Naive thymus-derived CD4-positive, alpha-beta T cell (primary cell): ENCODE measurements at regions of chr11 and their contacts with region 1.

Region 1: GRCh38 chr11:114059278-114059983 is at the start of gene ZBTB16:
- DNase-seq: peak; percentile 37 to 72 (median 58)
- ATAC-seq: peak; percentile 74
- H3K4me3 ChIP-seq: peak within 1 kb of the TSS; percentile 70
- H3K4me3 Mint-ChIP-seq: peak within 1 kb of the TSS; percentile 89 to 95 (median 92)
- H3K27ac ChIP-seq: peak within 1 kb of the TSS; percentile 14
- H3K27ac Mint-ChIP-seq: peak within 1 kb of the TSS in 8 of 9 donors; percentile 21 to 81 (median 55)
- H3K4me1 ChIP-seq: peaks cover 0 to 10% of the 10 kb centered on the region in 2 donors
- H3K4me1 Mint-ChIP-seq: peaks cover 0 to 10% (median 7%) of the 10 kb centered on the region in 7 donors
- H3K27me3 ChIP-seq: no peaks in the 10 kb centered on the region
- H3K27me3 Mint-ChIP-seq: peaks cover 16 to 76% (median 24%) of the 10 kb centered on the region in 5 donors
- total RNA-seq, gene ZBTB16: 3.0 to 22.1 (median 7.2) TPM

Region 2: DNA sequence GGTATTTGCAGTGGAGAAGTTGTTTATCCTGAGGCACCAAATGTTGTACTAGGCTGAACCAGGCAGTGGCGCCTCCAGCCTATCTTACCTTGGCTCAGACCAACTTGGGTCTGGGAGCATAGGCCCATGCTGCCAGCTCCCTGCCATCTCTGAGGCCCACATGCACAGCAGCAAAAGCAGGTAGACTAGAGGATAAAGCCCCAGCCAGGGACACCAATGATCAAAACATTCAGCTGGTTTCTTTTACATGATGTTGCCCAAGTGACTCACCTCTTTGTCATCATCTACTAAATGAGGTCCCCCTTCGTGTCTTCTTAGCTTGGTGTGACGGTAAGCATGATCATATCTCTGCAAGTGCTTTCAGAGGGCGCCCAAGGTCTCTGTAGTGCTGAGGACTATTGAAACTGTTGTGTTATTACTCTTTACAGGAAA is 472.1 kb before region 1 on chr11:
- CTCF ChIA-PET with region 1: no interaction called
- POLR2A ChIA-PET with region 1: no interaction called
- intact Hi-C with region 1: no loop called
- DNase-seq: peak in 1 of 9 donors; percentile 27
- ATAC-seq: no peak
- H3K4me3 ChIP-seq: no peak overlapping the region
- H3K4me3 Mint-ChIP-seq: no peak overlapping the region
- H3K27ac ChIP-seq: no peak overlapping the region
- H3K27ac Mint-ChIP-seq: peak overlapping the region in 1 of 9 donors; percentile 77
- H3K4me1 ChIP-seq: no peaks in the 10 kb centered on the region
- H3K4me1 Mint-ChIP-seq: peaks cover 0 to 36% (median 0%) of the 10 kb centered on the region in 7 donors
- H3K27me3 ChIP-seq: no peaks in the 10 kb centered on the region
- H3K27me3 Mint-ChIP-seq: peaks cover 0 to 27% (median 10%) of the 10 kb centered on the region in 5 donors

Region 3: DNA sequence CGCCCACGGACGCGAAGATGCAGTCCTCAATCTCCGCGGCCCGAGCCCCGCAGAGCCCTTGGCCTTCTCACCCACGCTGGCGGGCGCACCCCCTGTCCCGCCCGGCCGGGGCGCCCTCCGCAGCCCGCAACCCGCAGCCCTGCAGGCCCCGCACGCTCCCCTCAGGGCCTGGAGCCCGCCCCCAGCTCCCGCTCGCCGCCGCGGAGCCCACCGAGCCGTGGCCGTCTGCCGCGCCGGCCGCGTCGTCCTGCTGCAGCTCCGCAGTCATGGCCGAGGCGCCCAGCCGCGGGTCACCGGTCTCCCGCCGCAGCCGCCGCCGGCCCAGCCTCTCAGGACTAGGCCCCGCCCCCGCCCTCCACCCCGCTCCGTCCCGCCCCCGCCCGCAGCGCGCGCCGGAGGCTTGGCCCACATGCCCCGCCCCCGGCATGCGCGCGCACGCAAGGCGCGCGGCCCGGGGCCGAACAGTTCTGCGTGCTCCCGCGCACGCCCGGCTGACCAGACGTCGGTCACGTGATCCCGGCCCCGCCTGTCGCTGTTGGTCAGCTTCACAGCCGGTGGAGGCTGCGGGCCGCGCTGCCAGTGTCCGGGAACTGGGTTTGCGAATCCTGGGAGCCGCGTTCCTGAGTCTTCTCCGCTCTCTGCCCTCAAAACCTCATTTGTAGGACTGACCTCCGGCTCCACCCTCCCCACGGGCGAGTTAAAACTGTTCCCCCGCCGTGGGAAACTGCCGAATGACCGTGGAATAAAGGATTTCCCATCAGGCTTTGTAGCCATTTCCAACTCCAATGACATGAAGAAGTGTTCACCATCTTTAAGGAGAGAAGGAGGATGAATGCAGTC is 184.0 kb before region 1 on chr11 and contains the start of gene USP28:
- CTCF ChIA-PET with region 1: no interaction called
- POLR2A ChIA-PET with region 1: no interaction called
- intact Hi-C with region 1: loop called in 1 of 2 experiments (anchors 1 kb)
- DNase-seq: peak; percentile 49 to 92 (median 73)
- ATAC-seq: peak; percentile 97
- H3K4me3 ChIP-seq: peak within 1 kb of the TSS; percentile 79
- H3K4me3 Mint-ChIP-seq: peak within 1 kb of the TSS; percentile 88 to 100 (median 98)
- H3K27ac ChIP-seq: peak within 1 kb of the TSS; percentile 78
- H3K27ac Mint-ChIP-seq: peak within 1 kb of the TSS; percentile 91 to 99 (median 98)
- H3K4me1 ChIP-seq: no peaks in the 10 kb centered on the region
- H3K4me1 Mint-ChIP-seq: peaks cover 34 to 59% (median 54%) of the 10 kb centered on the region in 7 donors
- H3K27me3 ChIP-seq: no peaks in the 10 kb centered on the region
- H3K27me3 Mint-ChIP-seq: no peaks in the 10 kb centered on the region
- total RNA-seq, gene USP28: 12.0 to 50.3 (median 19.0) TPM

Region 4: GRCh38 chr11:114036156-114036811 is 23.1 kb before region 1 on chr11:
- CTCF ChIA-PET with region 1: interaction called, 4 read pairs
- POLR2A ChIA-PET with region 1: interaction called, 3 read pairs
- intact Hi-C with region 1: loop called in 1 of 2 experiments (anchors 1 kb)
- DNase-seq: peak; percentile 16 to 57 (median 42)
- ATAC-seq: peak; percentile 89
- H3K4me3 ChIP-seq: no peak overlapping the region
- H3K4me3 Mint-ChIP-seq: peak overlapping the region in 5 of 10 donors; percentile 11 to 57 (median 44)
- H3K27ac ChIP-seq: no peak overlapping the region
- H3K27ac Mint-ChIP-seq: peak overlapping the region in 1 of 9 donors; percentile 28
- H3K4me1 ChIP-seq: peaks cover 0 to 3% of the 10 kb centered on the region in 2 donors
- H3K4me1 Mint-ChIP-seq: peaks cover 0 to 5% (median 0%) of the 10 kb centered on the region in 7 donors
- H3K27me3 ChIP-seq: no peaks in the 10 kb centered on the region
- H3K27me3 Mint-ChIP-seq: peaks cover 0 to 34% (median 0%) of the 10 kb centered on the region in 5 donors

Region 5: GRCh38 chr11:114099392-114100178 is 40.2 kb after region 1 on chr11:
- CTCF ChIA-PET with region 1: no interaction called
- POLR2A ChIA-PET with region 1: interaction called, 4 read pairs
- intact Hi-C with region 1: loop called (anchors 5 to 10 kb)
- DNase-seq: no peak
- ATAC-seq: peak; percentile 43
- H3K4me3 ChIP-seq: no peak overlapping the region
- H3K4me3 Mint-ChIP-seq: no peak overlapping the region
- H3K27ac ChIP-seq: no peak overlapping the region
- H3K27ac Mint-ChIP-seq: peak overlapping the region in 4 of 9 donors; percentile 2 to 76 (median 54)
- H3K4me1 ChIP-seq: peaks cover 13 to 21% of the 10 kb centered on the region in 2 donors
- H3K4me1 Mint-ChIP-seq: peaks cover 19 to 75% (median 47%) of the 10 kb centered on the region in 7 donors
- H3K27me3 ChIP-seq: no peaks in the 10 kb centered on the region
- H3K27me3 Mint-ChIP-seq: peaks cover 0 to 28% (median 0%) of the 10 kb centered on the region in 5 donors

Region 6: DNA sequence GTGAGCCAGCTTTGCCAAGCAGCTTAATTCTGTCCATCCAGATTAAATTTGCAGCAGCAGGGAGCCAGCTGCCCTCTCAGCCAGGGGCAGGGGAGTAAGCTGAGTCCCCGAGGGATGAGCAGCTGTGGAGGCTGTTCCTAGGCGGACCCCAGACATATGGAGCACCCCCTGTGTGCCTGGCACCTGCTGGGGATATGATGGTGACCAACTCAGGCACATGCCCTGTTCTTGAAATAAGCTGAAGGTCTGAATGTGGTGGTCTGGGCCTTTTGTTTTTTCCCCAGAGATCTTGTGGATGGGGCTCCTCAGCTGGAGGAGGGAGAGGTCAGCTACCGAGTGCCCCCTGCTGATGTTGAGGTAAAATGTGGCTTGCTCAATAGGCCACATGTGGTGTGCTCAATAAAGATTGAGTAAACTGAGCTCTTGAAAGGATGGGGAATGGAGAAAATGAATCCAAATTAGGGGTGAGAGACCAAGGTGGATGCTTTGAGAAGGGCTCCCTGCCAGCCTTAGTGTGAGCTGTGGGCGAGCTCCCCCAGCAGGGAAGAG is 133.5 kb after region 1 on chr11:
- CTCF ChIA-PET with region 1: interaction called, 5 read pairs
- POLR2A ChIA-PET with region 1: interaction called, 6 read pairs
- intact Hi-C with region 1: loop called (anchors 1 kb)
- DNase-seq: no peak
- ATAC-seq: no peak
- H3K4me3 ChIP-seq: no peak overlapping the region
- H3K4me3 Mint-ChIP-seq: no peak overlapping the region
- H3K27ac ChIP-seq: no peak overlapping the region
- H3K27ac Mint-ChIP-seq: peak overlapping the region in 5 of 9 donors; percentile 16 to 54 (median 39)
- H3K4me1 ChIP-seq: peaks cover 3 to 8% of the 10 kb centered on the region in 2 donors
- H3K4me1 Mint-ChIP-seq: peaks cover 11 to 57% (median 37%) of the 10 kb centered on the region in 7 donors
- H3K27me3 ChIP-seq: no peaks in the 10 kb centered on the region
- H3K27me3 Mint-ChIP-seq: peaks cover 0 to 3% (median 0%) of the 10 kb centered on the region in 5 donors

Region 7: GRCh38 chr11:114280696-114281095 is 221.3 kb after region 1 on chr11:
- CTCF ChIA-PET with region 1: no interaction called
- POLR2A ChIA-PET with region 1: no interaction called
- intact Hi-C with region 1: no loop called
- DNase-seq: peak in 5 of 9 donors; percentile 24 to 39 (median 26)
- ATAC-seq: no peak
- H3K4me3 ChIP-seq: no peak overlapping the region
- H3K4me3 Mint-ChIP-seq: no peak overlapping the region
- H3K27ac ChIP-seq: no peak overlapping the region
- H3K27ac Mint-ChIP-seq: peak overlapping the region in 1 of 9 donors; percentile 56
- H3K4me1 ChIP-seq: no peaks in the 10 kb centered on the region
- H3K4me1 Mint-ChIP-seq: no peaks in the 10 kb centered on the region
- H3K27me3 ChIP-seq: no peaks in the 10 kb centered on the region
- H3K27me3 Mint-ChIP-seq: peaks cover 5 to 34% (median 18%) of the 10 kb centered on the region in 5 donors

Region 8: DNA sequence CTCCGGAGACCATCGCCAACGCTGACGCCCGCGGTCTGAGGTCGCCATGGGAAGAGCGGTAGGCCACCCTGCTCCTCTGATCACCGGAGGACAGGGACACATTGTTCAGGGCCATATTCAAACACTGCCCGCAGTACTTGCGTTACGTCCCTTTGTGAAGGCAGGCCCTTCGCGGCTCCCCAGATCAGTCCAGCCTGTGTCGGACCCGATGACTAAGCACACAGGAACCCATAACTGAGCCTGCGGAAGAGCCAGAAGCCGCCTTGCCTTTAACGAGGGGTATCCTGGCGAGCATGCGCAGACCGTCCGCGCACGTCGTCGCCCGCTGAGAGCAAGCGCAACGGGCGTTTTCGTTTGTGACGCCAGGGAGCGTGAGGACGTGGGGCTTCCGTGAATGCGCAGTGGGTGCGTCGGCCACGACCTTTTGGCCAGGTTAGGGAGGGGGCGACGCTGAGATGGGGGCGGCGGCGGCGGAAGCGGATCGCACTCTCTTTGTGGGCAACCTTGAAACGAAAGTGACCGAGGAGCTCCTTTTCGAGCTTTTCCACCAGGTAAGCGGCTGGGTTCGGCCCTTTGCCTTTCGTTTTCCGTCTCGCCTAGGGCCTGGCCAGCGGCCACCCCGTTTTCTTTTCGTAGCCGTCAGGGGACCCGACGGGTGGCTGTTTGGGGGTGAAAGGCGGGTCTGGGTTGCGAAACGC is 340.9 kb after region 1 on chr11 and contains the starts of genes C11orf71 and RBM7:
- CTCF ChIA-PET with region 1: no interaction called
- POLR2A ChIA-PET with region 1: no interaction called
- intact Hi-C with region 1: loop called in 1 of 2 experiments (anchors 5 kb)
- DNase-seq: peak; percentile 94 to 97 (median 95)
- ATAC-seq: peak; percentile 96
- H3K4me3 ChIP-seq: peak within 1 kb of the TSS; percentile 93
- H3K4me3 Mint-ChIP-seq: peak within 1 kb of the TSS; percentile 89 to 99 (median 97)
- H3K27ac ChIP-seq: peak within 1 kb of the TSS; percentile 96
- H3K27ac Mint-ChIP-seq: peak within 1 kb of the TSS; percentile 96 to 100 (median 99)
- H3K4me1 ChIP-seq: peaks cover 25% of the 10 kb centered on the region in 2 donors
- H3K4me1 Mint-ChIP-seq: peaks cover 33 to 77% (median 68%) of the 10 kb centered on the region in 7 donors
- H3K27me3 ChIP-seq: no peaks in the 10 kb centered on the region
- H3K27me3 Mint-ChIP-seq: no peaks in the 10 kb centered on the region
- total RNA-seq, gene C11orf71: 6.0 to 19.1 (median 17.1) TPM
- total RNA-seq, gene RBM7: 35.8 to 71.3 (median 43.4) TPM

Region 9: DNA sequence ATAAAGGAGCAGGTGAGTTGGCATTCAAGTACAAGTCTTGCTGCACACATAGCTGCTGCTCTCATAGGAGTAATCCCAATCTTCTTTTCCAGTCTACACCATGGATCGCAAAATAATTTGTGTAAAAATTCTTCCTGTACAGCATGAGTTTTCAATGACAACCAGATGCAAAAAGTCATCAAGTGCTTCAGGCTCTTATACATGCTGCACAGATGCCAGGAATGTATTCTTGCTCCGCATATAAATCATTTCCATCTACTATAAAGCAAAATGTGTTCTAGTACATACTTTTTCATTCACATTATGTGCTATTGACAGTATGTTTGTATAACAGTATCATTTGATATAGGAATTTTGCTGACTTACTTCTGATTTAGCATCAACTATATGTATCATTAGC is 654.3 kb after region 1 on chr11:
- CTCF ChIA-PET with region 1: no interaction called
- POLR2A ChIA-PET with region 1: no interaction called
- intact Hi-C with region 1: no loop called
- DNase-seq: no peak
- ATAC-seq: no peak
- H3K4me3 ChIP-seq: no peak overlapping the region
- H3K4me3 Mint-ChIP-seq: no peak overlapping the region
- H3K27ac ChIP-seq: no peak overlapping the region
- H3K27ac Mint-ChIP-seq: no peak overlapping the region
- H3K4me1 ChIP-seq: no peaks in the 10 kb centered on the region
- H3K4me1 Mint-ChIP-seq: no peaks in the 10 kb centered on the region
- H3K27me3 ChIP-seq: no peaks in the 10 kb centered on the region
- H3K27me3 Mint-ChIP-seq: peaks cover 2 to 13% (median 9%) of the 10 kb centered on the region in 5 donors